ENCODE measurements at regions of chr17 and their contacts with region 1.

Region 1: GRCh38 chr17:78176548-78177025 is 8.2 kb downstream of the SYNGR2 start:
- DNase-seq: peak; percentile 76 to 86
- ATAC-seq: peak; percentile 75 to 81
- H3K4me3 ChIP-seq: no peak overlapping the region
- H3K27ac ChIP-seq: peak overlapping the region in 1 of 2 experiments; percentile 34; a peak in 1 of 6 replicates
- H3K4me1 ChIP-seq: peaks cover 30% of the 10 kb centered on the region
- CTCF ChIP-seq: peak; percentile 94
- EP300 ChIP-seq: no peak
- POLR2A ChIP-seq: no peak
- RAD21 ChIP-seq: peak; percentile 73 to 82

Region 2: DNA sequence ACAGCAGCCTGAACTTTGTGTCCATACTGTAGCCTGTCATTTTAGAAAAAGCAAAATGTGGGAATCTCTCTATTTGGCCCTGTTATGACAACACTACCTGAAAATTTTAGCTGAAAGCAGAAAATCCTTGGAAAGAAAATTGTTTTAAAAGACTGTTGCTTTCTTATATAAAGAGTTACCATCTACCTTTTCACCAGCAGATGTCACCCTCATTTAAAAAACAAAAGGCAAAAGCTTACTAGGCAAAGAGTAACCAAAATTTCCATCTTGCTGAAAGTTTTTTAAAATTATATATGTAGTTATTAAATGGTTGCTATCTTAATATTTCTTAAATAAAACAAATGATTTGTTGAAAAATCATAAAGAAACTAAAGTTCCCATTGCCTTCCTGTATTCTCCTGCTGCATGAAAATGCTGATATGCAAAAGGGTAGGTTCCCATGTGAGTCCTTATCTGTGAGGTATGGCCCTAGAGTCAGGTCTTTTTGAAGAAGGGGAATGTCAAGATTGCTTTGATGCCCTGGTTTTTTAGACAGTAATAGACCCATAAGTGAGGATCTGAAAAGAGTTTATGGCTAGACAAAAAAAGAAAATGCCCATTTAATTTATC is 157.1 kb before region 1 on chr17:
- CTCF ChIA-PET with region 1: interaction called, 28 read pairs
- POLR2A ChIA-PET with region 1: no interaction called
- DNase-seq: peak in 1 of 2 experiments; percentile 53
- ATAC-seq: peak in 1 of 2 experiments; percentile 70; a peak in 3 of 6 replicates
- H3K4me3 ChIP-seq: no peak overlapping the region
- H3K27ac ChIP-seq: no peak overlapping the region
- H3K4me1 ChIP-seq: no peaks in the 10 kb centered on the region
- CTCF ChIP-seq: peak; percentile 86
- EP300 ChIP-seq: no peak
- POLR2A ChIP-seq: no peak
- RAD21 ChIP-seq: peak; percentile 77 to 82

Region 3: DNA sequence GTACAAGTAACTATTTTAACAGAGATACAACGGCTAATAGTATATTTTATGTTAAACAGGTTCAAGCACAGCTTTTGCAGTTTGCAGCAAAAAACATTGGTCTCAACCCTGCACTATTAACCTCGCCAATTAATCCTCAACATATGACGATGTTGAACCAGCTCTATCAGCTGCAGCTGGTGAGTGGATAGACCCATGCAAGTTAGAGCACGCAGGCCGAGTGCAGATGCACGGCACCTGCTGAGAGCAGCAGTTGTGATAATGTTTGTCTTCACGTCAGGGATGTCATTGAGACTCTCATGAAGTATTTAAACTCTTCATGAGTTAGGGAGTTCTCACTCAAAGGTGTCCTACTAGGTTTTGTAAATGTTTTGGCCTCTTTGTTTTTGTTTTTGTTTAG is 93.6 kb before region 1 on chr17:
- CTCF ChIA-PET with region 1: interaction called, 23 read pairs
- POLR2A ChIA-PET with region 1: interaction called, 4 read pairs
- DNase-seq: no peak
- ATAC-seq: no peak
- H3K4me3 ChIP-seq: no peak overlapping the region
- H3K27ac ChIP-seq: no peak overlapping the region
- H3K4me1 ChIP-seq: no peaks in the 10 kb centered on the region
- CTCF ChIP-seq: no peak
- EP300 ChIP-seq: no peak
- POLR2A ChIP-seq: no peak
- RAD21 ChIP-seq: no peak

Region 4: DNA sequence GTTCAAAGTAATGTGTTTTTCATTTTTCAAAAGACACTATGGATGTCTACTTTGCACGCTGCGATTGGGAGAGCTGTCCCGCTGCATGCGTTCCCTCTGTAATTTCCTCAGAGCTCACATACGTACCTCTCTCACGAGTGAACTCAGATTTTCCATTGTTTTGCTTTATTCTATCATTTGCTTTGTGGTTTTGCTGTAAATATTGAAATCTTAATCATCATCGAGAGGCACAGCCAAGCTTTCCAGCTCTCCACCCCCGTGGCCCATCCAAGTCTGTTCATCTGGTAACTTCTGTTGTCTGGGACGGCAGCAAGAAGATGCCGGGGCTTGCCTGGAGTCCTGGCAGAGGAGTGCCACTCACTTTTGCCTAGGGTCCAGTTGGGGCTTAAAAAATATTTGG is 69.1 kb before region 1 on chr17:
- CTCF ChIA-PET with region 1: interaction called, 199 read pairs
- POLR2A ChIA-PET with region 1: interaction called, 7 read pairs
- DNase-seq: no peak
- ATAC-seq: no peak
- H3K4me3 ChIP-seq: no peak overlapping the region
- H3K27ac ChIP-seq: no peak overlapping the region
- H3K4me1 ChIP-seq: no peaks in the 10 kb centered on the region
- CTCF ChIP-seq: no peak
- EP300 ChIP-seq: no peak
- POLR2A ChIP-seq: no peak
- RAD21 ChIP-seq: no peak

Region 5: GRCh38 chr17:78186692-78187595 is 10.4 kb after region 1 on chr17 and contains the starts of genes AFMID and TK1:
- CTCF ChIA-PET with region 1: interaction called, 105 read pairs
- POLR2A ChIA-PET with region 1: interaction called, 5 read pairs
- DNase-seq: peak; percentile 99 to 100
- ATAC-seq: peak; percentile 93 to 94
- H3K4me3 ChIP-seq: peak within 1 kb of the TSS; percentile 72
- H3K27ac ChIP-seq: peak within 1 kb of the TSS; percentile 82 to 88
- H3K4me1 ChIP-seq: peaks cover 32% of the 10 kb centered on the region
- CTCF ChIP-seq: peak; percentile 89
- EP300 ChIP-seq: no peak
- POLR2A ChIP-seq: peak; percentile 95
- RAD21 ChIP-seq: peak in 1 of 2 experiments; percentile 29; a peak in 1 of 5 replicates
- polyA plus RNA-seq, gene AFMID: 33.4 and 59.8 TPM in 2 replicates
- polyA plus RNA-seq, gene TK1: 86.1 and 90.9 TPM in 2 replicates